Colonic mucosa (tissue), 4 donors: ENCODE measurements at regions of chr9 and their contacts with region 1.

Region 1: GRCh38 chr9:93231121-93231694 is 47.3 kb downstream of the WNK2 start:
- DNase-seq: peak; percentile 78
- H3K4me3 ChIP-seq: no peak overlapping the region
- H3K27ac ChIP-seq: peak overlapping the region; percentile 82
- H3K4me1 ChIP-seq: peaks cover 18% of the 10 kb centered on the region
- H3K27me3 ChIP-seq: no peaks in the 10 kb centered on the region
- CTCF ChIP-seq: no peak

Region 2: DNA sequence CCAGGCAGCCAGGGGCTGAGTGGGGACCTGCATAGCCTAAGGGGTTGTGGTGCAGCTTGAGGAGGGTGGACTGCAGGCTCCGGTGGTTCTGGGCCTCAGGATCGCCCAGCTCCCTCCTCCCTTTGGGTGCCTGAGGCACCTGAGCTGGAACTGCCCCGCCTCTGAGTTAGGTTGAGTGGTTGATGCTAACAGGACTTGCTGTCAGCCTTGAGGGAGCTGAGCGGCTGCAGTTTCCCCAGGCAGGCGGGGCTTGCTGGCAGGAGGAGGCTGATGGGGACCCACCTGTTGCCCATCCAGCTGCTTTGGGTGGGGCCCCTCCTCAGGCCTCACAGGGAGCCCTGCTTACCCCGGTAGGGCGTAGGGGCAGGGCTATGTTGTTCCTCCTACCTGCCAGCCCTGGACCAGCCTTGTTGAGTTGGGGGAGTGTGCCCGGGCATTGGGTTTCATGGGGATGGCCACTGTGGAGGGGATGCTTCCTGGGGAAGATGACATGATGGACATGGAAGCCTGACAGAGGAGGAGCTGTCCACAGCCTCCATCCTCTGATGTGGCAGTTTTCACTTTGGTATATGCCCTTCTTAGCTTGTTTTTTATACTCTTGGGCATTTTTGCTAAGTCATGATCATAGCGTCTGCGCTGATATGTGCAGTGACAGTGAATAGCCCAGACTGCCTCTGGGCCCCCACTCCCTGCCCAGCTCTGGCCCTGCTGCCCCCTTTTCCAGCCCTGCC is 32.9 kb before region 1 on chr9:
- intact Hi-C with region 1: loop called (anchors 5 kb)
- DNase-seq: peak; percentile 53
- H3K4me3 ChIP-seq: no peak overlapping the region
- H3K27ac ChIP-seq: peak overlapping the region; percentile 22
- H3K4me1 ChIP-seq: peaks cover 34% of the 10 kb centered on the region
- H3K27me3 ChIP-seq: no peaks in the 10 kb centered on the region
- CTCF ChIP-seq: no peak

Region 3: DNA sequence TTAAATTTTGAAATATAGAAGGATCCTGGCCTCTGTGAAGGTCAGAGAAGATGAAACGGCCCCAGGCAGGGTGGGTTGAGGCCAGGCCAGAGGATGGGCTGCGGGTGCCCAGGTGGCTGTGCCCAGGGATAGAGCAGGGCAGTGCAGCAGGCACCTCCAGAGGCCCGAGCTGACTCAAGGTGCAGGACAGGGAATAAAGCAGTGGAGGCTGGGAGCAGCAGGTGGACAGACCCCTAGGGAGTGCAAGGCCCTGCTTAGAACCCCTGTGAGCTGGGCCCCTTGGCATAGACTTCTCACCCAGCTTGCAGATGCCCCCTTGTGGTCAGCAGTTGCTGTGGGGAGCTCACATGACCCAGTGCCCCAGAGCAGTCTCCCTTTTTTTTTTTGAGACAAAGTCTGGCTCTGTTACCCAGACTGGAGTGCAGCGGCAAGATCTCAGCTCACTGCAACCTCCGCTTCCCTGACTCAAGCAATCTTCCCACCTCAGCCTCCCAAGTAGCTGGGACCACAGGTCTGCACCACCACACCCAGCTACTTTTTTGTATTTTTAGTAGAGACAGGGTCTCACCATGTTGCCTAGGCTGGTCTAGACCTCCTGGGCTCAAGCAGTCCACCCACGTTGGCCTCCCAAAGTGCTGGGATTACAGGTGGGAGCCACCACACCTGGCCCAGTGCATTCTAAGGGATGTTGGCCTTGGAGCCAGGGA is 71.5 kb after region 1 on chr9:
- intact Hi-C with region 1: loop called (anchors 10 kb)
- DNase-seq: peak; percentile 70
- H3K4me3 ChIP-seq: no peak overlapping the region
- H3K27ac ChIP-seq: no peak overlapping the region
- H3K4me1 ChIP-seq: peaks cover 26% of the 10 kb centered on the region
- H3K27me3 ChIP-seq: no peaks in the 10 kb centered on the region
- CTCF ChIP-seq: peak; percentile 51